ENCODE measurements at regions of chr12 and their contacts with region 1.

Region 1: DNA sequence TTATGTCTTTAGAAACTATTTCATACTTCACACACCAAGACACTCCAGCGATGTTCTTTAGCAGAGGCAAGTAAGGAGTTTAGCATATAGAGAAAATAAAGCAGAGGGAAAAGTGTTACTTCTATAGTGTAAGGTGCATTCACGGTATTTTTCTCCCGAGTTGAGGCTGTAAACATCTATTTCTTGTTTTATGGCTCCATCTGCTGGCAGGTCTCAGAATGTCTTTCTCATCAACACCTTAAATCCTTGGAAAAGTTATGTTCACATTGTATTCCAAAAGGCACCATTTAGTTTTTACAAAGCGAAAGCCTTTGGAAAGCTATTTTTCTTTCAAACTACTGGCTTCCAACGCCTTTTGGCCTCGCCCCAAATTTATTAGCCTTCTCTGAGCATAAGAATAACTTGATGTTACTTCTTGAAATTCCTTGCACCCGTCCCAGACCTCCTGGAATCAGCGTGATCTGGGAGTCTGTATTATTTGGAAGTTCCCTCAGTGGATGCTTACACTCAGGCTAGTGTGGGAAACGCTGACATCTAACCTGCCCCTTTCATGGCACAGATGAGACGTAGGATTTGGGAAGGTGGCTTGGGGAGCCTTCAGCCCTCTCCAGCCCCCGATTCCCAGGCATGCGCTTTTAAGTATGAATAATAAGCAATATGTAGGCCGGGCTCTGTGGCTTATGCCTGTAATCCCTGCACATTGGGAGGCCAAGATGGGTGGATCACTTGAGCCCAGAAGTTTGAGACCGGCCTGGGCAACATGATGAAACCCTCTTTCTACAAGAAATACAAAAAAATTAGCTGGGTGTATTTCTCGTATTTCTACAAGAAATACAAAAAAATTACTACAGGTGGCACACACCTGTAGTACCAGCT is 1.9 kb upstream of the PIWIL1 start:
- DNase-seq: no peak
- H3K4me3 Mint-ChIP-seq: no peak overlapping the region
- H3K27ac Mint-ChIP-seq: no peak overlapping the region
- H3K4me1 Mint-ChIP-seq: no peaks in the 10 kb centered on the region
- H3K27me3 Mint-ChIP-seq: peaks cover 4% of the 10 kb centered on the region

Region 2: DNA sequence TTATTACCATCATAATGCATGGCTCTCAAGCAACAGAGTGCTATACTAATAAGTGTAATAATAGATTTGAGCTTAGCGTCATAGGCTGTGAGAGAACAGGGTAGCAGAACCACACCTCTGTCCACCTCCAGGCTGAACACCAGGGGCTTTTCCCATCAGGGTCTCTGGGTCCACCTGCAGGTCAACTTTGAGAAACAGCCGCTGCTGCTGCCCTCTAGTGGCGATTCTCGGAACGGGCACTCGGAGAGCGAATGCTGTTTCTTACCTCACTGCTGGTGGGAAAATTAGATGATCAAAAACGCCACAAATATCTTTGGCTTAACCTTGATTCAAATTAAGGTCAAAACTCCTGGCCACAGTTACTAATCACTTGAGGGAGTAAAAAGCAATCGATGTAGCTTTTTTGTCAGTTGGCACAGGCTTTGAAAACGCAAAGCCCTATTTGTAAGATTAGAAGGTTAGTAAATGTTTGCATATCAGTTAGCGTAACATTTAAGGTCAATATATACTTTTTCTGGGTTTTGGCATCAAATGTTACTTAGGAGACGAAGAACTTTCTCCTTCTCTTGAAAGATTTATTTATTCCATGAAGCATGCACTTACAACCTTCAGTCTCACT is 304.1 kb before region 1 on chr12:
- intact Hi-C with region 1: loop called (anchors 1 kb)
- DNase-seq: peak; percentile 45
- H3K4me3 Mint-ChIP-seq: no peak overlapping the region
- H3K27ac Mint-ChIP-seq: no peak overlapping the region
- H3K4me1 Mint-ChIP-seq: no peaks in the 10 kb centered on the region
- H3K27me3 Mint-ChIP-seq: no peaks in the 10 kb centered on the region

Region 3: DNA sequence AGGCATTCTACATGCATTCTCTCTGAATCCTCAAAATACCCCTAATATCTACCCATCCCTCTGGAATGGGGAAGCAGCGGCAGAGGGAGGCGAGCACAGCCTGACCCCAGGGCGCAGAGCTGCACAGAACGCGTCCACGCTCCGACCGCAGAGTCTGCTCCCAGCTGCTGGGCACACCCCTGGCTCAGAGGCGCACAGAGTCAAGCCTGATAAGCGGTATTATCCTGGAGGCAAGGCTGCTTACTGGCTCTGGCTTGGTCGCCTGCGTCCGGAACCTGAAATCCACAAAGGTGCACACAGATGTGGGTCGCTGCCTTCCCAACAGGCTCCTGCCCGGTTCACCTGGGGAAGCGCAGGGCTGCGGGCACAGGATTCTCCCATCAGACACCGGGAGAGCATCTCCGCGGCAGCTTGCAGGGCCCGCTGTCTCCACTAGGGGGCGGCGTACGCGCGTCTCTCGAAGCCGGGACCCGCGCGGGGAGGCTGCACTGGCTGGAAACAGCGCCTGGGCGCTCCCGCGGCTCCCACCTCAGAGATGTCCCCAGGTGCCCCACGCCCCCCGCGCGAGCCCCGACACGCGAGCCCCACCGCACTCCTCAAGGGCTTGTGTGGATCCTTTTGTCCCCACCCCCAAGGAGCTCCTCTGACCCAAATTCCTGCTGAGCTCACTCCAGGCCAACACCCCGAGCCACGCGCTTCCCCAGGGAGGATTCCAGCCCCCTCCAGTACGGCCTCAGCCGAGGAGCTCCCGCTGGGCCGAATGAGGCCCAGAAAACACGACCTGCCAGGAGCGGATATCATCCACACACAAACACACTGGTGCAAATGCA is 293.6 kb before region 1 on chr12:
- intact Hi-C with region 1: loop called (anchors 1 kb)
- DNase-seq: no peak
- H3K4me3 Mint-ChIP-seq: no peak overlapping the region
- H3K27ac Mint-ChIP-seq: no peak overlapping the region
- H3K4me1 Mint-ChIP-seq: no peaks in the 10 kb centered on the region
- H3K27me3 Mint-ChIP-seq: peaks cover 12% of the 10 kb centered on the region

Region 4: DNA sequence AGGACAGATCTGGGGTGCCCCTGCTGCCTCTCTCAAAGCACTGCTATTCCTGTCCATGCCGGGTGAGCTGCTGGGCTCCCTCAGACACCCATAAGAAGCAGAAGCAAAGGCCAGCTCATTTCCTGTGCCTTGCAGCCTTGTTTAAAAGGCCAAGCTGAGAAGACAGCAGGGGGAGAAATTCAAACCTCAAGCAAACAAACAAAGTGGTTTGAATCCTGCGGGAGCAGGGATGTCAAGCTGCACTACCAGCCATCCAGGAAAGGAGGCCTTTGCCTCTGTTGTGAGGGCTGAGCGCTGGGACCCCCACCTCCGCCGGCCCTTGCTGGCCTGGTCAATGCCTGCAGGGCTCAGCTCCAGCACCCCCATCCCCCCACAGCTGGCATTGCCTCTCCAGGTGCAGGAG is 178.4 kb after region 1 on chr12:
- intact Hi-C with region 1: no loop called
- DNase-seq: no peak
- H3K4me3 Mint-ChIP-seq: no peak overlapping the region
- H3K27ac Mint-ChIP-seq: no peak overlapping the region
- H3K4me1 Mint-ChIP-seq: no peaks in the 10 kb centered on the region
- H3K27me3 Mint-ChIP-seq: no peaks in the 10 kb centered on the region

Region 5: GRCh38 chr12:130787445-130788410 is 452.0 kb after region 1 on chr12:
- intact Hi-C with region 1: no loop called
- DNase-seq: no peak
- H3K4me3 Mint-ChIP-seq: no peak overlapping the region
- H3K27ac Mint-ChIP-seq: no peak overlapping the region
- H3K4me1 Mint-ChIP-seq: no peaks in the 10 kb centered on the region
- H3K27me3 Mint-ChIP-seq: no peaks in the 10 kb centered on the region

Measured in activated T-helper 1 cell treated with anti-CD3 and anti-CD28 coated beads, Interleukin-12 subunit alpha, Interleukin-12 subunit beta, Interleukin-2, Interleukin-4 antibody, amounts not matched to agents 30 ng/mL and 10 ng/mL and 1 ng/mL, durations not matched to agents 14 hours and 24 hours and 36 hours (primary cell).